ENCODE measurements at regions of chr7 and their contacts with region 1.

Region 1: GRCh38 chr7:133853706-133854276 is 273.3 kb upstream of the LRGUK start:
- DNase-seq: peak; percentile 21 to 71
- H3K4me3 ChIP-seq: no peak overlapping the region
- H3K27ac ChIP-seq: no peak overlapping the region
- H3K4me1 ChIP-seq: peaks cover 0 to 3% (median under 1%) of the 10 kb centered on the region in 4 experiments; a peak in 1 of 7 replicates
- H3K27me3 ChIP-seq: no peaks in the 10 kb centered on the region
- CTCF ChIP-seq: peak; percentile 52 to 99 (median 91)
- EP300 ChIP-seq: no peak
- POLR2A ChIP-seq: no peak
- RAD21 ChIP-seq: peak; percentile 79 to 81

Region 2: GRCh38 chr7:133633062-133633461 is 220.7 kb before region 1 on chr7:
- CTCF ChIA-PET with region 1: no interaction called
- POLR2A ChIA-PET with region 1: no interaction called
- DNase-seq: no peak
- H3K4me3 ChIP-seq: no peak overlapping the region
- H3K27ac ChIP-seq: no peak overlapping the region
- H3K4me1 ChIP-seq: no peaks in the 10 kb centered on the region
- H3K27me3 ChIP-seq: no peaks in the 10 kb centered on the region
- CTCF ChIP-seq: no peak
- EP300 ChIP-seq: no peak
- POLR2A ChIP-seq: no peak
- RAD21 ChIP-seq: no peak

Region 3: DNA sequence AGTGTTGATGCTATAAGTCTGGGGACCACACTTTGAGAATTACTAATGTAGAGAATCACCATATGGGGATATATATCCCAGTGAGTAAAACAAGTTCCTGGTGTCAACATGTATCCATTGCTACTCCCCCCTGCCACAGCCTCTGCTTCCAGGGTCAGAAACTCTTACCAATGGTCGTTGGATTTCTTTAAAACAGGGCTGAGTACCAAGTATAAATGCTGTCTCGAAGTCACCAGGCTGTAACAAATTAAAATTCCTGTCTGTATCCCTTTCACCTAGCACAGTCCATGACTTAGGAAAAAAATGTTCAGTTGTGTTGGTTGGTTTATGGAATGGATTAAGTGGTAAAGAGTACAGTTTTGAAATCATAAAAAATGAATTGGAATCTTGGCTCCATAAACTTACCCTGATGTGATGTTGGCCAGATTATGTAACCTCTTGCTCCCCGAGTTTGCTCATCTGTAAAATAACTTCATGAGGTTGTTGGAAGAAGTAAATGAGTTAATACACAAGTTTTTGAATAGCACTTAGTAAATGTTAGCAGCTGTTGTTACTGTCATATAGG is 90.6 kb before region 1 on chr7:
- CTCF ChIA-PET with region 1: no interaction called
- POLR2A ChIA-PET with region 1: no interaction called
- DNase-seq: no peak
- H3K4me3 ChIP-seq: no peak overlapping the region
- H3K27ac ChIP-seq: no peak overlapping the region
- H3K4me1 ChIP-seq: peaks cover 0 to 2% (median 0%) of the 10 kb centered on the region in 4 experiments; a peak in 1 of 7 replicates
- H3K27me3 ChIP-seq: no peaks in the 10 kb centered on the region
- CTCF ChIP-seq: no peak
- EP300 ChIP-seq: no peak
- POLR2A ChIP-seq: no peak
- RAD21 ChIP-seq: no peak

Region 4: DNA sequence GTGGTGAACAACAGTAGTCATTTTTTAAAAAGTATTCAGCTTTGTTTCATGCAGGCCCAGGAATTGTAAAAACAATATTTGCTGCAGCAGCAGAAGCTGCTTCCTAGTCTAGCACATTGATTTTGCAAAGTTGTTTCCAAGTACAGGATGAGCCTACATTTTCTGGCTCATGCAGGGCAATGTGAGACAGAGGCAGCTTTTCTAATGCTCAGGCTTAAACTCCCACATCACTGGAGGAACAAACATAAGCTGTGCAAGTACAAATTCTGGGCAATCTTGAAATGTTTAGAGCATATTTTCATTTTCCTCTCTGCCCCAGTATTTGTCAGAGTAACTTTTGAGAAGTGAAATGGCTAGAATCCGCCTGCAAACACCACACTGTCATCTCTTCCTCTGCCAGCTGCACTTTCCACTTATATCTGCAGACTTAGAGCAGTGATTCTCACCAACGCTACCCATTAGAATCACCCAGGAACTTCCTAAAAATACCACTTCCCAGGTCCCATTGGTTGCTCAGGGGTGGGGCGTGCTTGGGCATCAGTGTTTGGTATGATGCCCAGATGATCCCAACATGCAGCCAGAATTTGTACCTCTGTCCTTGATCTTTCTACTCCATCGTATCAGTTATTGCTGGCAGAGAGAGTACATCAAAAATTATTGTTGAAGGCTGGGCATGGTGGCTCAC is 30.8 kb before region 1 on chr7:
- CTCF ChIA-PET with region 1: interaction called, 10 read pairs
- POLR2A ChIA-PET with region 1: no interaction called
- DNase-seq: no peak
- H3K4me3 ChIP-seq: no peak overlapping the region
- H3K27ac ChIP-seq: no peak overlapping the region
- H3K4me1 ChIP-seq: no peaks in the 10 kb centered on the region
- H3K27me3 ChIP-seq: no peaks in the 10 kb centered on the region
- CTCF ChIP-seq: no peak
- EP300 ChIP-seq: no peak
- POLR2A ChIP-seq: no peak
- RAD21 ChIP-seq: no peak

Region 5: DNA sequence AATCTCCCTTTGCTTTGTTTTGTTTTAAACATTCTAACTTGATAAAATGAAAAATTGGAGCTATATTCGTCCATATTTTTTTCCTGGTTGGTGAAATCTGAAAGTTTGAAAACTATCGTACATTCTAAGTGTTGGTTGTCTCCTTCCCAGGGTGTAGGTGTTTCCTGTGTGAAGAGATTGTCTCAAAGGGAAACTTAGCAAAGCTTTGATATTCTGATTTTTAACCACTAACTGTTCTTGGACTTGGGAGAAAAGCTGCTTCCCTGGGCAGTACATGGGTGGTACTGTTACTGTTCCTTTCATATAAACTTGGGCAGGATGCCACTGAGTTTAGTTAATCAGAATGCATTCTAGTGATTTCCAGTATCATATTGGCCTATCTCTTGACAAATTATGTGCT is 19.8 kb after region 1 on chr7:
- CTCF ChIA-PET with region 1: interaction called, 20 read pairs
- POLR2A ChIA-PET with region 1: no interaction called
- DNase-seq: no peak
- H3K4me3 ChIP-seq: no peak overlapping the region
- H3K27ac ChIP-seq: no peak overlapping the region
- H3K4me1 ChIP-seq: no peaks in the 10 kb centered on the region
- H3K27me3 ChIP-seq: no peaks in the 10 kb centered on the region
- CTCF ChIP-seq: no peak
- EP300 ChIP-seq: no peak
- POLR2A ChIP-seq: no peak
- RAD21 ChIP-seq: no peak

Region 6: DNA sequence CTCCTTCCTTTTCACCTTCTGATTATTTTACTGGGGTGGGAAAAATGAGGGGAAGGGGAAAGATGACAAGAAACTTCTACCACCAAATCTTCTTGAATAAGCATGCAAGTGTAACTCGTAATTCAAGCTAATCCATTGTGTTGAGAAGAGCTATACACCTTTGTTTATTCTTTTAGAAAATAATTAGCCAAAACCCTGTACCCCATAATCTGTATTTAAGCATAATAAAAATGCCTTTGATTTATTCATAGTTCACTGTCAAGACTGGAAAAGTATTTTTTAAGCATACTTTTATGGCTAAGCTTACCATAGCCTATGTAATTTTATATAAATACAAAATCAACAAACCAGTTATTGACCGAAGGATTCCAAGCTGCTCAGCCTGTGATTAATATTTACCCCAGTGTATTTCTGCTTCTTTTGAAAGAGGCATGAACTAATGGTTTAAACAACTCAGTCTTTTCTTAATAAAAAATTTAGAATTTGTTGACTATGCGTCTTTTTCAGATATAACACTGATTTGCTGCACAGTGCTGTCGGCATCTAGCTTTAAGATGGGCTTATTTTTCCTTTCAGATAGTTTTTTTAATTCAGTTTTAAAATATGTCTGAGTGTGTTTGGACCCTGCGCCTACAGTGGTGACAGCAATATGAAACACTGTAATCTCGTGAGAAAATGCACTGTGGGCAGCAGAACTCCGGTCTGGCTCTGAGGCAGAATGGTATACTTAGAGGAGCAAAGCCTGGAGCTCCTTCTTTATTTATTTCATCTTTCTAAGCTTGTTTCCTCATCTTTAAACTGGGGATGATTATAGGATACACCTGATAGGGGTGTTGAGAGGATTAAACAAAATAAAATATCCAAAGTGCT is 34.5 kb after region 1 on chr7:
- CTCF ChIA-PET with region 1: no interaction called
- POLR2A ChIA-PET with region 1: no interaction called
- DNase-seq: no peak
- H3K4me3 ChIP-seq: no peak overlapping the region
- H3K27ac ChIP-seq: no peak overlapping the region
- H3K4me1 ChIP-seq: no peaks in the 10 kb centered on the region
- H3K27me3 ChIP-seq: no peaks in the 10 kb centered on the region
- CTCF ChIP-seq: no peak
- EP300 ChIP-seq: no peak
- POLR2A ChIP-seq: no peak
- RAD21 ChIP-seq: no peak

Region 7: DNA sequence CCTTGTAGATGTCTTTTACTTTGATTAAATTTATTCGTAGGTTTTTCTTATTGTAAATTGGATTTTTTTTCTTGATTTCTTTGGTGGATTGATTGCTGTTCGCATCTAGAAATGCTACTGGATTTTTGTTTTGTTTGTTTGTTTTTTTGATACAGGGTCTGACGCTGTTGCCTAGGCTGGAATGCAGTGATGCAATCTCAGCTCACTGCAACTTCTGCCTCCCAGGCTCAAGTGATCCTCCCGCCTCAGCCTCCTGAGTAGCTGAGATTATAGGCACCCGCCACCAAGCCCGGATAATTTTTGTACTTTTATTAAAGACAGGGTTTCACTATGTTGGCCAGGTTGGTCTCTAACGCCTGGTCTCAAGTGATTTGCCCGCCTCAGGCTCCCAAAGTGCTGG is 138.4 kb after region 1 on chr7:
- CTCF ChIA-PET with region 1: interaction called, 24 read pairs
- POLR2A ChIA-PET with region 1: interaction called, 3 read pairs
- DNase-seq: no peak
- H3K4me3 ChIP-seq: no peak overlapping the region
- H3K27ac ChIP-seq: no peak overlapping the region
- H3K4me1 ChIP-seq: no peaks in the 10 kb centered on the region
- H3K27me3 ChIP-seq: no peaks in the 10 kb centered on the region
- CTCF ChIP-seq: no peak
- EP300 ChIP-seq: no peak
- POLR2A ChIP-seq: no peak
- RAD21 ChIP-seq: no peak

Region 8: GRCh38 chr7:134134004-134134403 is 280.2 kb after region 1 on chr7:
- CTCF ChIA-PET with region 1: interaction called, 10 read pairs
- POLR2A ChIA-PET with region 1: no interaction called
- DNase-seq: no peak
- H3K4me3 ChIP-seq: no peak overlapping the region
- H3K27ac ChIP-seq: no peak overlapping the region
- H3K4me1 ChIP-seq: peaks cover 5 to 19% (median 11%) of the 10 kb centered on the region in 4 experiments; a peak in 6 of 7 replicates
- H3K27me3 ChIP-seq: no peaks in the 10 kb centered on the region
- CTCF ChIP-seq: no peak
- EP300 ChIP-seq: no peak
- POLR2A ChIP-seq: no peak
- RAD21 ChIP-seq: no peak